ENCODE measurements at regions of chr1 and their contacts with region 1.

Region 1: GRCh38 chr1:44819608-44820327 is 11.4 kb downstream of the BTBD19 start:
- DNase-seq: peak; percentile 84 to 87 (median 87)
- H3K4me3 ChIP-seq: peak overlapping the region; percentile 68 to 79 (median 73)
- H3K4me3 Mint-ChIP-seq: peak overlapping the region; percentile 90 to 97
- H3K27ac ChIP-seq: peak overlapping the region; percentile 95 to 100
- H3K27ac Mint-ChIP-seq: peak overlapping the region; percentile 99 to 100 (median 100)
- H3K4me1 ChIP-seq: peaks cover 36% of the 10 kb centered on the region in 2 donors
- H3K4me1 Mint-ChIP-seq: peaks cover 49% of the 10 kb centered on the region
- H3K27me3 ChIP-seq: no peaks in the 10 kb centered on the region
- H3K27me3 Mint-ChIP-seq: peaks cover 0 to 1% (median 0%) of the 10 kb centered on the region in 3 donors
- CTCF ChIP-seq: no peak

Region 2: GRCh38 chr1:44730741-44731512 is 88.8 kb before region 1 on chr1 and contains the start of gene RNU5D-1:
- intact Hi-C with region 1: loop called in 1 of 2 experiments (anchors 5 kb)
- DNase-seq: peak; percentile 93 to 98 (median 97)
- H3K4me3 ChIP-seq: peak within 1 kb of the TSS; percentile 29 to 54 (median 40)
- H3K4me3 Mint-ChIP-seq: peak within 1 kb of the TSS; percentile 32 to 82
- H3K27ac ChIP-seq: peak within 1 kb of the TSS; percentile 75 to 100
- H3K27ac Mint-ChIP-seq: peak within 1 kb of the TSS; percentile 99 to 100 (median 100)
- H3K4me1 ChIP-seq: peaks cover 37 to 40% of the 10 kb centered on the region in 2 donors
- H3K4me1 Mint-ChIP-seq: peaks cover 45% of the 10 kb centered on the region
- H3K27me3 ChIP-seq: no peaks in the 10 kb centered on the region
- H3K27me3 Mint-ChIP-seq: peaks cover 0 to 5% (median 0%) of the 10 kb centered on the region in 3 donors
- CTCF ChIP-seq: peak; percentile 90
- polyA plus RNA-seq, gene RNU5D-1: not detected

Region 3: DNA sequence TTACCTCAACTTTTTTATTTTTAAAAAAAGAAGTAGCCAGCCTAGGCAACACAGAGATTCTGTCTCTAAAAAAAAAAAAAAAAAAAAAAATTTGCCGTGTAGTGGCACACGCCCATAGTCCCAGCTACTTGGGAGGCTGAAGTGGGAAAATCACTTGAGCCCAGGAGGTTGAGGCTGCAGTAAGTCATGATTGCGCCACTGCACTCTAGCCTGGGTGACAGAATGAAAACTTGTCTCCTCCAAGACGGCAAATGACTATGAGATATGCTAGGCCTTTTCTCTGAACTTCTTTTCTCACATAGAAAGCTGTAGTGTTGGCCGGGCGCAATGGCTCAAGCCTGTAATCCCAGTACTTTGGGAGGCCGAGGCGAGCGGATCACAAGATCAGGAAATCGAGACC is 48.0 kb after region 1 on chr1:
- intact Hi-C with region 1: no loop called
- DNase-seq: no peak
- H3K4me3 ChIP-seq: no peak overlapping the region
- H3K4me3 Mint-ChIP-seq: no peak overlapping the region
- H3K27ac ChIP-seq: no peak overlapping the region
- H3K27ac Mint-ChIP-seq: no peak overlapping the region
- H3K4me1 ChIP-seq: no peaks in the 10 kb centered on the region
- H3K4me1 Mint-ChIP-seq: no peaks in the 10 kb centered on the region
- H3K27me3 ChIP-seq: no peaks in the 10 kb centered on the region
- H3K27me3 Mint-ChIP-seq: no peaks in the 10 kb centered on the region
- CTCF ChIP-seq: no peak

Region 4: DNA sequence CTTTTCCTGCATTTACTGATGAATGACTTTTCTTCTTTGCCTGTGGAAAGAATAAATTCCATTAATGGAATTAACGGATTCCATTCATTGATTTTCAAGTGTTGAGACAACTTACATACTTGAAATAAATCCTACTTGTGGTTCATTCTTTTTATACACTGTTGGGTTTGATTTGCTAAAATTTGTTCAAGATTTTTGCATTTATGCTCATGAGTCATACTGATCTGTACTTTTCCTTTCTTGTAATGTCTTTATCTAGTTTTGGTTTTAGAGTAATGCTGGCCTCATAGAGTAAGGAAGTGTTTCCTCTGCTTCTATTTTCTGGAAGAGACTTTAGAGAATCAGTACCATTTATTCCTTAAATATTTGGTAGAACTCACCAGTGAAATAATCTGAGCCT is 206.7 kb after region 1 on chr1:
- intact Hi-C with region 1: no loop called
- DNase-seq: no peak
- H3K4me3 ChIP-seq: no peak overlapping the region
- H3K4me3 Mint-ChIP-seq: no peak overlapping the region
- H3K27ac ChIP-seq: no peak overlapping the region
- H3K27ac Mint-ChIP-seq: no peak overlapping the region
- H3K4me1 ChIP-seq: no peaks in the 10 kb centered on the region
- H3K4me1 Mint-ChIP-seq: no peaks in the 10 kb centered on the region
- H3K27me3 ChIP-seq: no peaks in the 10 kb centered on the region
- H3K27me3 Mint-ChIP-seq: peaks cover 3 to 5% (median 4%) of the 10 kb centered on the region in 3 donors
- CTCF ChIP-seq: no peak

Measured in CD14-positive monocyte (primary cell).